Activated T-helper 2 cell treated with anti-CD3 and anti-CD28 coated beads, Interferon-gamma antibody, Interleukin-2, Interleukin-4, amounts not matched to agents 10 μg/mL and 5 μg/mL and 100 μg/mL, durations not matched to agents 14 hours and 24 hours and 36 hours (primary cell): ENCODE measurements at regions of chr20 and their contacts with region 1.

Region 1: GRCh38 chr20:37901654-37902503 is 1.0 kb upstream of the VSTM2L start:
- DNase-seq: no peak
- H3K4me3 Mint-ChIP-seq: no peak overlapping the region
- H3K27ac Mint-ChIP-seq: no peak overlapping the region
- H3K4me1 Mint-ChIP-seq: peaks cover 10% of the 10 kb centered on the region
- H3K27me3 Mint-ChIP-seq: peaks cover 45% of the 10 kb centered on the region

Region 2: GRCh38 chr20:37564388-37565133 is 337.3 kb before region 1 on chr20:
- intact Hi-C with region 1: loop called (anchors 10 kb)
- DNase-seq: peak; percentile 22
- H3K4me3 Mint-ChIP-seq: no peak overlapping the region
- H3K27ac Mint-ChIP-seq: no peak overlapping the region
- H3K4me1 Mint-ChIP-seq: no peaks in the 10 kb centered on the region
- H3K27me3 Mint-ChIP-seq: peaks cover 32% of the 10 kb centered on the region

Region 3: GRCh38 chr20:37804584-37805566 is 97.0 kb before region 1 on chr20:
- intact Hi-C with region 1: no loop called
- DNase-seq: no peak
- H3K4me3 Mint-ChIP-seq: no peak overlapping the region
- H3K27ac Mint-ChIP-seq: no peak overlapping the region
- H3K4me1 Mint-ChIP-seq: peaks cover 4% of the 10 kb centered on the region
- H3K27me3 Mint-ChIP-seq: no peaks in the 10 kb centered on the region

Region 4: GRCh38 chr20:37914672-37915433 is 13.0 kb after region 1 on chr20:
- intact Hi-C with region 1: loop called (anchors 2 kb)
- DNase-seq: no peak
- H3K4me3 Mint-ChIP-seq: no peak overlapping the region
- H3K27ac Mint-ChIP-seq: no peak overlapping the region
- H3K4me1 Mint-ChIP-seq: peaks cover 9% of the 10 kb centered on the region
- H3K27me3 Mint-ChIP-seq: peaks cover 36% of the 10 kb centered on the region

Region 5: DNA sequence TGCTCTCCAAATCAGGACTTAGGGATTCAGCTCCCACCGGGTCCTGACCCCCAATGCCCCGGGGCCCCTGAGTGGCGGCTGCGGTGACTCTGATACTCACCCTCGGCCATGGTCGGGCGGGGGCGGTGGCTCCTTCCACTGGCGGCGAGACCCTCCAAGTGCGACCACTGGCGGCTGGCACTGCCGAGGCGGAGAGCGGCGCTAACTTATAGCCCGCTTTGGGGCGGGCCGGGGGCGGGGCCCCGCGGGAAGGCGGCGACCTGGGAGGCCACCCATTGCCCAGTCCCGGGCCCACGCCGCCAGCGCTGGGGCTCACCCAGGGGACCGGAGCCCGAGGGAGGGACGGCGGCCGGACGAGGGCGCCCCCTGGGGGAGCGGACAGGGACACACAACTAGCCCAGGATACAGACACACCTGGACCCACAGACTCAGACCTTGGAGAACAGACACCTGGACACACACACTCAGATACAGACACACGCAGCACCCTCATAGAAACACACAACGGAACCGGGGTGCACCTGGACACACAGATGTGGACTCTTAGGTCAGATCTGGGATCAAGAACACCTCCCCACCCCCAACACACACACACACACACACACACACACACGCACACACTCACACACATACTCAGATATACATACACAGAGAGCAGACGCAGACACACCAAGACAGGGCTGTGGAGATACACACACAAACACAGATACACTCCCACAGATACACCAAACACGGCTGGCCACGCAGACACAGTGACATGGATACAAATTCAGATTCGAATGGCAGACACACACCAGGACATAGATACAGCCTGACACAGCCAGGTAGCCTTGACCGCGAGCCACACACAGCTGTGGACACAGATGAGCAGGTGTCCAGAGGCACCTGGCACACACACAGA is 263.5 kb after region 1 on chr20 and contains the start of gene TGM2:
- intact Hi-C with region 1: no loop called
- DNase-seq: peak; percentile 32
- H3K4me3 Mint-ChIP-seq: no peak within 1 kb of the TSS
- H3K27ac Mint-ChIP-seq: no peak within 1 kb of the TSS
- H3K4me1 Mint-ChIP-seq: peaks cover 11% of the 10 kb centered on the region
- H3K27me3 Mint-ChIP-seq: peaks cover 18% of the 10 kb centered on the region
- total RNA-seq, gene TGM2: not detected in 2 replicates